ENCODE measurements at regions of chr1 and their contacts with region 1.

Region 1: GRCh38 chr1:24830680-24831272 is 85.5 kb downstream of the CLIC4 start:
- DNase-seq: no peak

Region 2: DNA sequence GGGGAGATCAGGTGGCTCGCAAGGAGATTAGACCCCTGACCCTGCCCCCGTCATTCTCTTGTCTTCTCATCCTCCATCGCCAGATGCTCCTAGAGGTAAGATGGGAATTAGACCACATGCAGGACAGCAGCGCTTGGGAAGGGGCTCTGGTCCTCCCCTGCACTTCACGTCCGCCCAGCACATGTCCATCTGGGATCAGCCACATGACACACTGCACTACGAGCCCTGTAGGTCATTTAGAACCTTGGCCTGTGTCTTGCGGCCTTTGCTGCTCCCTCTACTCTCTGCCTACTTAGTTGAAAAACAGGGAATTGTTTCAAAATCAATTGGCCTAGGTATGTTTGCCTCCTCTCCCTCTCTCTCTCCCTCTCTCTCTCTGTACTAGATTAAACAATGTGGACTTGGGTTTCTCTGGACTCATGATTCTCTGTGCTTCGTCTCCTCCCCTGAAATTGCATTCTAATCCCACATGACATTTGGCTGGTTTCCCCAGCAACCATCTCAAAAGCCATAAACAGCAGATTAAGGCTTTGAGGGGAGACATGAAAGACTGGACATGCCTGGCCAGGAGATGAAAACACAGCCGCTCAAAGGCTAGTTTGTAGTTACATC is 278.7 kb before region 1 on chr1:
- intact Hi-C with region 1: loop called (anchors 5 kb)
- DNase-seq: peak; percentile 20

Region 3: GRCh38 chr1:24642481-24643361 is 188.1 kb before region 1 on chr1 and contains the start of gene SRRM1:
- intact Hi-C with region 1: loop called (anchors 2 kb)
- DNase-seq: peak; percentile 100
- total RNA-seq, gene SRRM1: 78.2 TPM

Region 4: GRCh38 chr1:24688621-24689195 is 142.1 kb before region 1 on chr1:
- intact Hi-C with region 1: loop called (anchors 2 kb)
- DNase-seq: peak; percentile 80

Region 5: GRCh38 chr1:24744911-24745710 is 85.7 kb before region 1 on chr1 and contains the start of gene CLIC4:
- intact Hi-C with region 1: loop called (anchors 2 kb)
- DNase-seq: peak; percentile 100
- total RNA-seq, gene CLIC4: 316 TPM

Region 6: DNA sequence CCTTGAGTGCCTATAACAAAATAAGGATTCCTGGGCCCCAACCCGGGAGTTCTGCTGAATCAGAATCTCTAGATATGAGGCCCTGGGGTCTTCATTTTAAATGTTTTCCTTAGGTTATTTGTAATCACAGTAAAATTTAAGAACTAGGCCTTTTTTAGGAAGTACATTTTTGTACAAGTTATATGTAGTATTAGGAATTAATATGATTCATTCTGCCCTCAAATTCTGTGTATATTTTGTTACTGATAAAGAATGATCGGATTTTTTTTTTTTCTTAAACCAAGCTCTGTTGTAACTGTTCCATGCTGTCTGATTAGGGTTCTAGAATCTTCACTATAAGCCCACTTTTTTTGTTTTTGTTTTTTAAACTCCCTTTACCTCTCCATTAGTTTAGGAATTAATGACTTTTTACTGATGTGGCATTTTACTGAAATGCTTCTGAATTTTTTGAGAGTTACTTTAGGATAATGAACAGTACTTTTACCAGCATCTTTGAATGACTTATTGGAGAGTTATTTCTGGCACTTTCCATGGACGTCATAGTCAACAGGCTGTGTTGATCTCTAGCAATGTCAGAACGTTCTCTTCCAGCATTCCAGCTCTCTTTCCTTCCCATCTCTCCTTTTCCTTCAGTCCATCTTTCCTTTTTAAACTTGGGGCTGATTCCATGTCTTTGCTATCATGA is 37.2 kb before region 1 on chr1:
- intact Hi-C with region 1: loop called (anchors 5 kb)
- DNase-seq: no peak

Region 7: DNA sequence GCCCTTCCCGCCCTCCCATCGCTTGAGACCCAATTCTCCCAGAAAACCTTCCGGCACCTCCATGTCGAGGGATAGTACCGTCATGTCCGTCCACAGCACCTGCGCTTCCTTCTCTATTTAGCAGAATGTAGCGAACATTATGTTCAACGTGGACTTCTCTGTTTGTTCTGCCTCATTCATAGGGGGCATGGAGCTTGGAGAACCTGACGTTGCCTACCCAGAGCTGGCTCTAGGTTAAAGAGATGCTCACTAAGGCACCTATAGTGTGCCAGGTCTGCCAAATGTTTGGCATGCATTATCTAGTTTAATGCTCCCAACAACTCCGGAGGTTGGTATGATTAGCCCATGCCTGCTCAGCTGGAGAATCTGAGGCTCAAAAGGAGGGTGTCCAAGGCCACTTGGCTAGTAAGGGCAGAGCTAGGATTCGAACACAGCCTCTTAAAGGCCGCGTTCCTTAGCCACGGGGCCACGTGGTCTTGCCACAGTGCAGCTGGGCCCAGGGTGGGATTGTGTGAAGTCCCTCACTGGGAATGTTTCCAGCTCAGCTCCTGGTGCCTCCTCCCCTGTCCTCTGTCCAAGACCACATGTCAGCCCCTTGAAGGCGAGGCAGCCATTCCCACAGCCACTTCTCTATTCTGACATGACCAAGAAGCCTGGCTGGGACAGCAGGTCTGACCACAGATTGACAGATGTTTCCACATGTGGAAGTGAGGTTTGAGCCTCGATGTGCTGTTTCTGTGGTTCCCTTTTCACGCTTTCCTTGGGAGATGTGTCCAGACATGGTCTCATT is 41.5 kb after region 1 on chr1:
- intact Hi-C with region 1: no loop called
- DNase-seq: no peak